H1 (cell line): ENCODE measurements at regions of chr6 and their contacts with region 1.

Region 1: GRCh38 chr6:28923318-28924102 is at the start of gene TRIM27:
- DNase-seq: peak; percentile 63 to 88
- H3K4me3 ChIP-seq: peak within 1 kb of the TSS; percentile 87 to 98 (median 94)
- H3K27ac ChIP-seq: peak within 1 kb of the TSS; percentile 84
- H3K4me1 ChIP-seq: peaks cover 0 to 12% (median 6%) of the 10 kb centered on the region in 4 experiments; a peak in 5 of 7 replicates
- H3K27me3 ChIP-seq: no peaks in the 10 kb centered on the region
- CTCF ChIP-seq: peak in 1 of 3 experiments; percentile 5; a peak in 1 of 4 replicates
- EP300 ChIP-seq: no peak
- POLR2A ChIP-seq: peak; percentile 84 to 92
- RAD21 ChIP-seq: no peak
- total RNA-seq, gene TRIM27: 76.4 and 78.9 TPM in 2 replicates

Region 2: GRCh38 chr6:28875191-28875747 is 48.2 kb before region 1 on chr6:
- CTCF ChIA-PET with region 1: no interaction called
- POLR2A ChIA-PET with region 1: interaction called, 12 read pairs
- DNase-seq: no peak
- H3K4me3 ChIP-seq: peak overlapping the region in 1 of 4 experiments; percentile 15; a peak in 1 of 8 replicates
- H3K27ac ChIP-seq: no peak overlapping the region
- H3K4me1 ChIP-seq: peaks cover 1 to 5% (median 4%) of the 10 kb centered on the region in 4 experiments; a peak in 4 of 7 replicates
- H3K27me3 ChIP-seq: no peaks in the 10 kb centered on the region
- CTCF ChIP-seq: no peak
- EP300 ChIP-seq: no peak
- POLR2A ChIP-seq: no peak
- RAD21 ChIP-seq: no peak

Region 3: DNA sequence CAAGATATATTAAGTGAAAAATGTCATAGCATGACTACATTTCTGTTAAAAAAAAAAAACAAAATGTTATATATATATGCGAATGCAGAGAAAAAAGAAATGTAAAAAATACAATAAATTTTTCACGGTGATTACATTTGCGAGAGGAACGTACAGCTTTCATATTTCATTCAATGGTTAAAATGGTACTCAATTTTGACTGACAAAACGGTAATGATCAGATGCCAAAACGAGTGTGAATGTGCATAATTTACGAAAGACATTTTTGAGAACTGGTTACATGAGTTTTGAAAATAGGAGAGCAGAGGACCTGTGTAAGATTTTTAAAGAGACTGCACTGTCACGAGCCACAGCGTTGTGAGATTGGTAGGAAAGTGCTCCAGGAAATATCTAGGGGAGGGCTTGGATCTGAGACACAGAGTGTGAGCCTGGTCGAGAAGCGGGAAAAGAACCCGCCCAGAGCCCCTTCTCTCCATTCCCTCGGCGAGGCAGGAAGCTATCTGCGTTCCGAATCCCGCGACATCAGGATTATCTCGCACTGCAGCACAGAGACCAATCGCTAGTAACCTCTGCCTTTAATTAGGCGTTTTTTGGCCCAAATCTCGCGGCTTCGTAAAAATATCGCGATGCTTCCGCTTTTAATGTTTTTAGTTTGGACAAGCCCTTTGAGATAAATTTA is 28.2 kb before region 1 on chr6:
- CTCF ChIA-PET with region 1: interaction called, 5 read pairs
- POLR2A ChIA-PET with region 1: interaction called, 42 read pairs
- DNase-seq: peak; percentile 87
- H3K4me3 ChIP-seq: peak overlapping the region; percentile 81 to 90 (median 84)
- H3K27ac ChIP-seq: peak overlapping the region; percentile 89
- H3K4me1 ChIP-seq: no peaks in the 10 kb centered on the region
- H3K27me3 ChIP-seq: no peaks in the 10 kb centered on the region
- CTCF ChIP-seq: no peak
- EP300 ChIP-seq: no peak
- POLR2A ChIP-seq: peak; percentile 80 to 96
- RAD21 ChIP-seq: no peak

Region 4: GRCh38 chr6:28907394-28907793 is 16.1 kb before region 1 on chr6:
- CTCF ChIA-PET with region 1: interaction called, 7 read pairs
- POLR2A ChIA-PET with region 1: interaction called, 90 read pairs
- DNase-seq: no peak
- H3K4me3 ChIP-seq: no peak overlapping the region
- H3K27ac ChIP-seq: no peak overlapping the region
- H3K4me1 ChIP-seq: no peaks in the 10 kb centered on the region
- H3K27me3 ChIP-seq: no peaks in the 10 kb centered on the region
- CTCF ChIP-seq: no peak
- EP300 ChIP-seq: no peak
- POLR2A ChIP-seq: no peak
- RAD21 ChIP-seq: no peak

Region 5: GRCh38 chr6:28981833-28982475 is 58.4 kb after region 1 on chr6:
- CTCF ChIA-PET with region 1: interaction called, 5 read pairs
- POLR2A ChIA-PET with region 1: interaction called, 27 read pairs
- DNase-seq: peak in 1 of 2 experiments; percentile 89
- H3K4me3 ChIP-seq: peak overlapping the region; percentile 91 to 100 (median 96)
- H3K27ac ChIP-seq: no peak overlapping the region
- H3K4me1 ChIP-seq: peaks cover 0 to 12% (median 2%) of the 10 kb centered on the region in 4 experiments; a peak in 5 of 7 replicates
- H3K27me3 ChIP-seq: peaks cover 0 to 2% (median 0%) of the 10 kb centered on the region in 4 experiments; a peak in 2 of 7 replicates
- CTCF ChIP-seq: peak in 1 of 3 experiments; percentile 10; a peak in 1 of 4 replicates
- EP300 ChIP-seq: no peak
- POLR2A ChIP-seq: no peak
- RAD21 ChIP-seq: no peak; a peak in 1 of 4 replicates